ENCODE measurements at regions of chr1 and their contacts with region 1.

Region 1: GRCh38 chr1:20212685-20213331 is 26.5 kb upstream of the PLA2G2C start:
- DNase-seq: peak; percentile 18
- H3K4me3 ChIP-seq: no peak overlapping the region
- H3K27ac ChIP-seq: no peak overlapping the region
- H3K27me3 ChIP-seq: peaks cover 23% of the 10 kb centered on the region
- CTCF ChIP-seq: peak; percentile 86

Region 2: GRCh38 chr1:20047096-20047495 is 165.7 kb before region 1 on chr1:
- CTCF ChIA-PET with region 1: no interaction called
- POLR2A ChIA-PET with region 1: no interaction called
- DNase-seq: no peak
- H3K4me3 ChIP-seq: no peak overlapping the region
- H3K27ac ChIP-seq: no peak overlapping the region
- H3K27me3 ChIP-seq: peaks cover 14% of the 10 kb centered on the region
- CTCF ChIP-seq: no peak

Region 3: DNA sequence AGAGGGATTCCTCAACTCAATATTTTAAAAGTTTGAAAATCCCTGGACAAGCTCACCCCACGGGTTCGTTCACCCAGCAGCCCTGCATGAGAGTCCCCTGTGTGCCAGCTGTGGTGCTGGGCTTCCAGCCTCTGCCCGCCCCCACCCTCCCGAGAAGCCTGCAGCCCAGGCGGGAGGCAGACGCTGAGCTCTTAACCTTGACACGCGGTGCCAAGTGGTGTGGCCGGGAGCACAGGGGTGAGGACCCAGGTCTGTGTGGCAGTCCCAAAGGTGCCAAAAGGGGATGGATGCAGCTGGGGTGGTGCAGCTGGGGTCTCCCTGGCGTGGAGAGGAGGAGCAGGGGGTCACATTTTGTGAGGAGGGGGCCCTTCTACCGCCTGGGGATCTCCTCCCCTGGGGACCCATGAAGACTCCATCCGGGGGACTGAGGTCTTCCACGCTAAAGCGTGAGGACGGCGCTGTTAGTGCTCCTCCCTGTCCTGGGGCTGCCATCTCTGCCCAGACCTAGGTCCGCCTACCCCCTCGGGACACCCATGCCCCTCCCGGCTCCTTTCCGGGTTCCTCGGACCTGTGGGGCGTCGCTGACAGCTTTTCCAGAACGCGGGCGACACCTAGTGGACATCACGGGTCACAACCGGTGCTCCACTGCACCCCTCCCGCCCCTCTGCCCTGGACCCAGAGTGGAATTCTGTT is 60.8 kb before region 1 on chr1:
- CTCF ChIA-PET with region 1: interaction called, 16 read pairs
- POLR2A ChIA-PET with region 1: no interaction called
- DNase-seq: peak; percentile 33
- H3K4me3 ChIP-seq: peak overlapping the region; percentile 44
- H3K27ac ChIP-seq: no peak overlapping the region
- H3K27me3 ChIP-seq: peaks cover 11% of the 10 kb centered on the region
- CTCF ChIP-seq: peak; percentile 83

Region 4: DNA sequence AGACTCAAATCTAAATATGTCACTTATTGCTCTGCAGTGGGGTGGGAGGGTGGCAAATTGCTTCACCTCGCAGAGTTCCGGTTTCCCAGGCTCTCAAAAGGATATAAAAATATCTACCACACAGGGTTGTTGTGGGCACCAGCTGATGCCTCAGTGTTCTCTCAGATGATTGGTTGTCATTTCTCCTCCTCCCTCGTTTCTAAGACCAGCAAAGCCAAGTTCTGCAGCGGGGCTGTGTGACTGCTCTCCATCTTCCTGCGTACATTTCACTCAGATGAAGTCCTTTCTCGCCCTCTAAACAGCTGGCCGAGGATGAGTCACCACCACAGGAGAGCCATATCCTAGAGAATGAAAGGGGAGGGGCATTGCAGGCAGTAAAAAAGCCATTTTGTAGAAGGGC is 42.9 kb after region 1 on chr1:
- CTCF ChIA-PET with region 1: interaction called, 12 read pairs
- POLR2A ChIA-PET with region 1: no interaction called
- DNase-seq: peak; percentile 45
- H3K4me3 ChIP-seq: no peak overlapping the region
- H3K27ac ChIP-seq: peak overlapping the region; percentile 65
- H3K27me3 ChIP-seq: peaks cover 11% of the 10 kb centered on the region
- CTCF ChIP-seq: no peak

Region 5: DNA sequence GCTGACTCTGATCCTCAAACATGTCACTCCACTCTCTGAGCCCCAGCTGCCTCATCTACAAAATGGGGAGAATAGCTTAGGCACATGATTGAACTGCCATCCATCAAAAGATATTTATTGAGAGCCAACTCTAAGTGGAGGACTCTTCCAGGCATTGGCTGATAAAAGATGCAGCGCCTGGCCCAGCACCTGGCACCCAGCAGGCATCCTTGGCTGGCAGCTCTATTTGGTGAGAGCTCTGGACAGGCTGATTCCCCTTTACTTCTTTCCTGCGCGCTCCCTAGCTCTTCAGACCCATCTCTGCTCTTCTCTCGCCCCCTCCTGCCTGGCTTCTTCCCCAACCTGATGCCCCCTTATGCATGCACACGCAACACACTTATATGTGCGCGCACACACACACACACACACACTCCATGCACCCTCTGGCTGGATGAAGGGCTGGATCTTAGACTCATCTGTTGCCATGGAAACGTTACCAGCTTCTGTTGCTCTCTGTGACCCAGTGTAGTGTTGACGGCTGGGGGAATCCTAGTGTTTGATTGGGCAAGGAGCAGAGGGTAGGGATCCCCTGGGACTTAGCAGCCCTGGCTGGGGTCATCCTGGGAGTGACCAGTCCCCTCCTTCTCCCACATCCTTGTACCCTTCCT is 127.1 kb after region 1 on chr1:
- CTCF ChIA-PET with region 1: no interaction called
- POLR2A ChIA-PET with region 1: no interaction called
- DNase-seq: no peak
- H3K4me3 ChIP-seq: no peak overlapping the region
- H3K27ac ChIP-seq: no peak overlapping the region
- H3K27me3 ChIP-seq: peaks cover 44% of the 10 kb centered on the region
- CTCF ChIP-seq: no peak

Region 6: DNA sequence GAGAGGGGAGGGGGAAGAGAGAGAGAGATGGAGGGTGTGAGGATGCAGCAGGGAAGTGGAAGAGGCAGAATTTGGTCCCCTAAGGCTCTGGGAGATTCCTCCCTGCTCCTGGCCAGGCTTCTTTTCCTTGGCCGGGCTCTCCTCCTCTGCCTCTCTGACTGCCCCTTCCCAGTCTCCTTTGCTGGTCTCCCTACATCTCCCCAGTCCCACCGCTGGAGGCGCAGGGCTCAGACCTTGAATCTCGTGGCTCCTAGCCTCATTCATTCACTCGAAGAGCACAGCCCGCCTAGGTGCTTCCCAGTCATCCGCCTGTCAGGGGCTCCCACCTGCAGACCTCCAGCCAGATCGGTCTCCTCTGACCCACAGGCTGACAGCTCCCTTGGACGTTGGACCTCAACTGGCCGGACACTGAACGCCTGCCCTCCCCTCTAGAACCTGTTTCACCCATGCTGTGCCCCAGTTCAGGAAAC is 154.3 kb after region 1 on chr1:
- CTCF ChIA-PET with region 1: interaction called, 16 read pairs
- POLR2A ChIA-PET with region 1: no interaction called
- DNase-seq: no peak
- H3K4me3 ChIP-seq: no peak overlapping the region
- H3K27ac ChIP-seq: no peak overlapping the region
- H3K27me3 ChIP-seq: peaks cover 66% of the 10 kb centered on the region
- CTCF ChIP-seq: peak; percentile 79

Region 7: GRCh38 chr1:20430355-20431175 is 217.8 kb after region 1 on chr1:
- CTCF ChIA-PET with region 1: interaction called, 27 read pairs
- POLR2A ChIA-PET with region 1: no interaction called
- DNase-seq: no peak
- H3K4me3 ChIP-seq: no peak overlapping the region
- H3K27ac ChIP-seq: no peak overlapping the region
- H3K27me3 ChIP-seq: peaks cover 7% of the 10 kb centered on the region
- CTCF ChIP-seq: peak; percentile 83

Region 8: DNA sequence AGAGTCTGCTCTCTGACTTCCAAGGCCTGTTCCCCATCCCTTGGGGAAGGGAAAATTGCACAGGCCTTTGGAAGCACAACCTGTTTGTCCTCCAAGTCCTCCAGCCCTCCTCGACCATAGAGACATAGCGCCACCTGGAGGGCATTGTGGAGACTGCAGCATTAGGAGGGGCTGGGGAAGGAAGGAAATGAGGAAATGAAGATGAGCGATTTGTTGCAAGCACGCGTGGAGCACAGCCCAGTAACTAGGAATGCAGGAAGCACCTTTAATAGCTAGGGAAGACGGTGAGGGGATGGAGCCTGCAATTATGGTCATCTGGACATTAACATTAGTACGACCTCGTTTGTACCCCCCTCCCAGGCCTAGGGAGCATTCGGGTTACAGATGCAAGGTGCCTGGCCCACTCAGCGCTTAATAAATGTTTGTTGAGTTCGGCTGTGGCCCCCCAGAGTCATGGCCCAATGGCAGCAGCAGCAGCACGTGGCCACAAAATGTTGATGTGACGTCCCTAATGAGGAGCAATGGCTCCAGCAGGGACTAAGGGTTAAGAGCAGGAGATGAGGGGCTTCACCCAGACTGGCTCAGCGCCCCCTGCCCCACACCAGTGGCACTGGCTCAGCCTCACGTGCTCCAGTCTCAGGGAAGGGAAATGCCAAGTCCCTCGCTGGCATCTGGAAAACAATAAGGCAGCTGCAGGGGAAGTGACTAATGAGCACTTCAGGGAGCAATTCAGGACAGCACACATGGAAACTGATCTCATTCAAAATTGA is 281.2 kb after region 1 on chr1:
- CTCF ChIA-PET with region 1: interaction called, 176 read pairs
- POLR2A ChIA-PET with region 1: no interaction called
- DNase-seq: peak; percentile 79
- H3K4me3 ChIP-seq: no peak overlapping the region
- H3K27ac ChIP-seq: peak overlapping the region; percentile 70
- H3K27me3 ChIP-seq: no peaks in the 10 kb centered on the region
- CTCF ChIP-seq: peak; percentile 99